PC-3 (cell line): ENCODE measurements at regions of chr1 and their contacts with region 1.

Region 1: DNA sequence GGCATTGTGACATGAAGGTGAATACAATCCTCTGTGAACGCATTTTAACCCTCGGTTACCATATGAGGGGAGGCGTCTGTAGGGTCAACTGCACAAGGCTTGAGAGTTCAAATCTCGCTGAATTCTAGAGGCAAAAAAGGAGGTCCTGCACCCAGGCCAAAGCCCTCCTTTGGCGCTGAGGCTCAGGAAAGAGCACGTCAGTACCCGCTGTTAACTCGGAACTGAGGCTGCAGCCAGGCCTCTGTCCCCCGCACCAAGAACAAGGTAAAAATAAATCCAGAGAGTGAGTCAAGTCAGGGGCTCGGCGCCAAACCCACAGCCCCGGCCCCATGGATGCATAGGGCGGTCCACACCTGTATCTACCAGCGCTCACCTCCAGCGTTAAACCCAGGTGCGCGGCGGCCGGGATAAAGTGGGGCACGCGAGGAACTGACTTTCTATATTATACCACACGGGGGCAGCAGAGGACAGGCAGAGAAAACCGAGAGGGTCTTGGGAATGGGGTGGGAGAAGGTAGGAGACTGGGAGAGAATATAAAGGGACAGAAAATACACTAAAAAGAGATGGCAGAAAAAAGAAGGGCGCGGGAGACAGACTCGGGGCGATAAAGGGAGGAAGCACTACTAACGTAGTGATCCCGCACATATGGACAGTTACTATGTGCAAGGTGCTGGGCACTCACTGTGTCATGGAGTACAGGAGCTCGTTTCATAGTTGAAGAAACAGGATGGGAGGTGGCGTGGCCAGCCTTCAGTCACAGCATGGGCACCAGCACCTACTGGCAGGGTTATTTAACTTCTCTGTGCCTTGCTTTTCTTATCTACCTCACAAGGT is 54.8 kb downstream of the DMRTA2 start:
- DNase-seq: peak; percentile 23
- ATAC-seq: peak; percentile 49
- H3K4me3 ChIP-seq: no peak overlapping the region
- H3K27ac ChIP-seq: no peak overlapping the region
- H3K4me1 ChIP-seq: no peaks in the 10 kb centered on the region
- H3K27me3 ChIP-seq: no peaks in the 10 kb centered on the region
- CTCF ChIP-seq: peak; percentile 57

Region 2: DNA sequence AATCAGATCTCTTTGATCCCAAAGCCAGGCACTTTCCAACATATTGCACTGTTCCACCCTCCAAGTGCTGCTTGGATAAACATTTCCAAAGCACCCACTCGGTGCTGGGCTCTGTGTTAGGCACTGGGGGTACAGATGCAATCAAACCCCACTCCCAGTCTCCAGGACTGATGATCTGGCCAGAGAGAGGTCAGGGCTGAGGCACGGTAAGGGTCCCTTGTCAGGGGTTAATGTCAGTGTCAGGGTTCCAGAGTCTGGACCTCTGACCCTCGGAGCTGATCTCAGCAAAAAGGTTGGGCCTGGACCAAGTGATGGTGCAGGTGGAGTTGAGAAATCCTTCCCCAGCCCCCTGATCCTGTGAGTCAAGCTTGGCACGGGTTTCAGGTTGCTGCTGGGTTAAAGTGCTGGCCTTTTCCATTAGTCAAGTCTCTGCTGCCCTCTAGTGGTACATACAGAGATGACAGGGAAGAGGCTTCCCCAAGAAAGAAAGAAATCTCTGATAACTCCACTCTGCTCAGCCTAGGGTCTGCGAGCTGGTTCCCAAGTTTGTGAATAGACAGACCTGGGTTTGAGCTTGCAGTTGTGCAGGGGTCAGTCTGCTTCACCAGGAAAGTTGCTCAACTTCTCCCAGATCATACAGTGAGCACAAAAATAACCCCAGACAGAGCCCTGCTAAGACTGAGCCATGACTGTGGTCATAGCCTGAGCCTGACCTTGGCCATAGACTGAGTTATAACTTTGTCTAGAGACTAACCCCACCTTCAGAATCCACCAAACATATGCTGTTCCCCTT is 19.8 kb before region 1 on chr1:
- CTCF ChIA-PET with region 1: no interaction called
- POLR2A ChIA-PET with region 1: no interaction called
- intact Hi-C with region 1: no loop called
- DNase-seq: peak; percentile 64
- ATAC-seq: peak; percentile 50
- H3K4me3 ChIP-seq: no peak overlapping the region
- H3K27ac ChIP-seq: no peak overlapping the region
- H3K4me1 ChIP-seq: no peaks in the 10 kb centered on the region
- H3K27me3 ChIP-seq: no peaks in the 10 kb centered on the region
- CTCF ChIP-seq: peak; percentile 61

Region 3: DNA sequence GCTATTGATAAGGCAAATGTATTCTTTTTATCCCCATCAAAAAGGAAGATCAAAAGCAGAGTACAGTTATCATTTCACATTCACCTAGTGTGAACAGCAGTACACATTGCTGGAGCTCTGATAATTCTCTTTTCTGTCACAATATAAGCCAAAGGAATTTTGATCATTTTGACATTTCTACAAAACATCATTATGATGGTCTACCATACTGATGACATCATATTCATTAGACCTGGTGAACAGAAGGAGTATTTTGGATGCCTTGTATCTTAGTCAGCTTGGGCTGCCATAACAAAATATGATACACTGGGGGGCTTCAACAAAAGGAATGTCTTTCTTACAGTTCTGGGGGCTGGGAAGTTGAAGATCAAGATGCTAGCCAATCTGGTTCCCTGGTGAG is 18.0 kb after region 1 on chr1:
- CTCF ChIA-PET with region 1: no interaction called
- POLR2A ChIA-PET with region 1: no interaction called
- intact Hi-C with region 1: no loop called
- DNase-seq: no peak
- ATAC-seq: no peak
- H3K4me3 ChIP-seq: no peak overlapping the region
- H3K27ac ChIP-seq: no peak overlapping the region
- H3K4me1 ChIP-seq: no peaks in the 10 kb centered on the region
- H3K27me3 ChIP-seq: no peaks in the 10 kb centered on the region
- CTCF ChIP-seq: no peak

Region 4: GRCh38 chr1:50605186-50605875 is 236.9 kb after region 1 on chr1:
- CTCF ChIA-PET with region 1: no interaction called
- POLR2A ChIA-PET with region 1: no interaction called
- intact Hi-C with region 1: loop called (anchors 1 kb)
- DNase-seq: peak; percentile 22
- ATAC-seq: no peak; the same call in 1 of the 2 replicates
- H3K4me3 ChIP-seq: no peak overlapping the region
- H3K27ac ChIP-seq: no peak overlapping the region
- H3K4me1 ChIP-seq: peaks cover 13% of the 10 kb centered on the region
- H3K27me3 ChIP-seq: no peaks in the 10 kb centered on the region
- CTCF ChIP-seq: peak; percentile 45; the same call in 1 of the 2 replicates